ENCODE measurements at regions of chr1 and their contacts with region 1.

Region 1: GRCh38 chr1:192550922-192551534 is 24.5 kb upstream of the RGS1 start:
- DNase-seq: peak; percentile 49
- ATAC-seq: peak; percentile 81
- H3K4me3 Mint-ChIP-seq: peak overlapping the region; percentile 26
- H3K27ac Mint-ChIP-seq: peak overlapping the region; percentile 82
- H3K4me1 Mint-ChIP-seq: peaks cover 45% of the 10 kb centered on the region
- H3K27me3 Mint-ChIP-seq: no peaks in the 10 kb centered on the region
- CTCF ChIP-seq: no peak

Region 2: GRCh38 chr1:192539297-192540092 is 11.5 kb before region 1 on chr1:
- CTCF ChIA-PET with region 1: interaction called, 12 read pairs
- POLR2A ChIA-PET with region 1: interaction called, 8 read pairs
- intact Hi-C with region 1: no loop called
- DNase-seq: no peak
- ATAC-seq: peak; percentile 22
- H3K4me3 Mint-ChIP-seq: no peak overlapping the region
- H3K27ac Mint-ChIP-seq: peak overlapping the region; percentile 83
- H3K4me1 Mint-ChIP-seq: peaks cover 50% of the 10 kb centered on the region
- H3K27me3 Mint-ChIP-seq: no peaks in the 10 kb centered on the region
- CTCF ChIP-seq: no peak